GM12878 (cell line): ENCODE measurements at regions of chr12 and their contacts with region 1.

Region 1: GRCh38 chr12:66403746-66404145 is 101.5 kb downstream of the HELB start:
- DNase-seq: no peak
- ATAC-seq: no peak
- H3K4me3 ChIP-seq: no peak overlapping the region
- H3K27ac ChIP-seq: no peak overlapping the region
- H3K4me1 ChIP-seq: no peaks in the 10 kb centered on the region
- H3K27me3 ChIP-seq: no peaks in the 10 kb centered on the region
- CTCF ChIP-seq: no peak
- EP300 ChIP-seq: no peak
- POLR2A ChIP-seq: no peak
- RAD21 ChIP-seq: no peak

Region 2: GRCh38 chr12:66269757-66270383 is 133.9 kb before region 1 on chr12:
- CTCF ChIA-PET with region 1: interaction called, 25 read pairs
- POLR2A ChIA-PET with region 1: no interaction called
- RAD21 ChIA-PET with region 1: interaction called, 17 read pairs
- SMC1A ChIA-PET with region 1: interaction called, 13 read pairs
- in situ Hi-C with region 1: loop called (anchors 5 kb)
- intact Hi-C with region 1: no loop called
- DNase-seq: peak; percentile 5
- ATAC-seq: peak; percentile 80
- H3K4me3 ChIP-seq: no peak overlapping the region
- H3K27ac ChIP-seq: no peak overlapping the region
- H3K4me1 ChIP-seq: peaks cover 12% of the 10 kb centered on the region
- H3K27me3 ChIP-seq: no peaks in the 10 kb centered on the region
- CTCF ChIP-seq: peak; percentile 46 to 59 (median 53); a peak in 5 of 6 replicates
- EP300 ChIP-seq: no peak
- POLR2A ChIP-seq: no peak
- RAD21 ChIP-seq: peak; percentile 73

Region 3: GRCh38 chr12:66352197-66352596 is 51.5 kb before region 1 on chr12:
- CTCF ChIA-PET with region 1: no interaction called
- POLR2A ChIA-PET with region 1: no interaction called
- RAD21 ChIA-PET with region 1: no interaction called
- SMC1A ChIA-PET with region 1: no interaction called
- in situ Hi-C with region 1: no loop called
- intact Hi-C with region 1: loop called (anchors 2 kb)
- DNase-seq: no peak
- ATAC-seq: peak; percentile 45; the same call in 2 of the 3 replicates
- H3K4me3 ChIP-seq: no peak overlapping the region
- H3K27ac ChIP-seq: no peak overlapping the region
- H3K4me1 ChIP-seq: no peaks in the 10 kb centered on the region
- H3K27me3 ChIP-seq: no peaks in the 10 kb centered on the region
- CTCF ChIP-seq: peak; percentile 29 to 36 (median 31); a peak in 2 of 6 replicates
- EP300 ChIP-seq: no peak
- POLR2A ChIP-seq: no peak
- RAD21 ChIP-seq: peak; percentile 68